Calu3 (cell line): ENCODE measurements at regions of chr2 and their contacts with region 1.

Region 1: GRCh38 chr2:64330281-64331113 is 123.5 kb upstream of the LGALSL start:
- DNase-seq: peak; percentile 74
- H3K4me3 Mint-ChIP-seq: peak overlapping the region; percentile 56
- H3K27ac Mint-ChIP-seq: no peak overlapping the region
- H3K4me1 Mint-ChIP-seq: peaks cover 18% of the 10 kb centered on the region
- H3K27me3 Mint-ChIP-seq: no peaks in the 10 kb centered on the region
- CTCF ChIP-seq: peak; percentile 84

Region 2: GRCh38 chr2:64052468-64053241 is 277.8 kb before region 1 on chr2:
- CTCF ChIA-PET with region 1: interaction called, 99 read pairs
- intact Hi-C with region 1: loop called (anchors 1 kb)
- DNase-seq: no peak
- H3K4me3 Mint-ChIP-seq: no peak overlapping the region
- H3K27ac Mint-ChIP-seq: no peak overlapping the region
- H3K4me1 Mint-ChIP-seq: peaks cover 8% of the 10 kb centered on the region
- H3K27me3 Mint-ChIP-seq: no peaks in the 10 kb centered on the region
- CTCF ChIP-seq: no peak

Region 3: GRCh38 chr2:64311948-64312621 is 18.4 kb before region 1 on chr2:
- CTCF ChIA-PET with region 1: interaction called, 17 read pairs
- intact Hi-C with region 1: no loop called
- DNase-seq: peak; percentile 79
- H3K4me3 Mint-ChIP-seq: peak overlapping the region; percentile 40
- H3K27ac Mint-ChIP-seq: peak overlapping the region; percentile 27
- H3K4me1 Mint-ChIP-seq: peaks cover 21% of the 10 kb centered on the region
- H3K27me3 Mint-ChIP-seq: peaks cover 13% of the 10 kb centered on the region
- CTCF ChIP-seq: peak; percentile 35

Region 4: DNA sequence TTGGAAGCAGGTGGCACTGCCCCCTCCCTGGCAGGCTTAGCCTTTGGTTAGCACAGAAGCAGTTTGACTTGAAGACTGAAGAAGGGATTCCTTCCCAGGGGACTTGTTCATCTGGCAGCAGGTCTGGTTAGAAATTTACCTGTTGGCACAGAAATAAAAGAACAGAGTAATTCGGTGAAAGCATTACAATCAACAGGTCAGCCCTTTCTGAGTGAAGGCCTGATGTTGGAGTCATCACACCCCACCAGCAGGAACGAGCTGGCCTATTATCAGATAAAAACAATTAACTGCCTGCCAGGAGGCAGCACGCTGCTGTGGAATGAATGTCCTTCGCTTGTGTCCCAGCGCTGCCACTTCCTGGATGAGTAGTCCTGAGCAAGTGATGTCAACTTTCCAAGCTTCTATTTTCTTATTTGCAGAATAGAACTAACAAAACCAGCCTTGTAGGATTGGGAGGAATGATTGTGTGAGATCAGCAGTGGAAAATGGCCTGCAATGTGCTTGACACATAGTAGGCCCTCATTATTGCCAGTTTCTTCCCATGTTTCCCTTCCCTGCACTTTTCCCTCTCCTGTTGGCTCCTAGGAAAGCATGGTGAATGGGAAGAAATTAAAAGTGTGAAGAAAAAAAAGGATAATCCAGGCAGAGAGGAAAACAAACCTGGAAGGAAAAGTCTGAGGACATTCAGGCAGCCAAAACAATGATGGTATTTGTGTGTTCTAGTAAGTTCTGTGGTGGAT is 152.4 kb after region 1 on chr2:
- CTCF ChIA-PET with region 1: interaction called, 38 read pairs
- intact Hi-C with region 1: loop called (anchors 1 kb)
- DNase-seq: peak; percentile 40
- H3K4me3 Mint-ChIP-seq: no peak overlapping the region
- H3K27ac Mint-ChIP-seq: no peak overlapping the region
- H3K4me1 Mint-ChIP-seq: no peaks in the 10 kb centered on the region
- H3K27me3 Mint-ChIP-seq: peaks cover 26% of the 10 kb centered on the region
- CTCF ChIP-seq: no peak

Region 5: DNA sequence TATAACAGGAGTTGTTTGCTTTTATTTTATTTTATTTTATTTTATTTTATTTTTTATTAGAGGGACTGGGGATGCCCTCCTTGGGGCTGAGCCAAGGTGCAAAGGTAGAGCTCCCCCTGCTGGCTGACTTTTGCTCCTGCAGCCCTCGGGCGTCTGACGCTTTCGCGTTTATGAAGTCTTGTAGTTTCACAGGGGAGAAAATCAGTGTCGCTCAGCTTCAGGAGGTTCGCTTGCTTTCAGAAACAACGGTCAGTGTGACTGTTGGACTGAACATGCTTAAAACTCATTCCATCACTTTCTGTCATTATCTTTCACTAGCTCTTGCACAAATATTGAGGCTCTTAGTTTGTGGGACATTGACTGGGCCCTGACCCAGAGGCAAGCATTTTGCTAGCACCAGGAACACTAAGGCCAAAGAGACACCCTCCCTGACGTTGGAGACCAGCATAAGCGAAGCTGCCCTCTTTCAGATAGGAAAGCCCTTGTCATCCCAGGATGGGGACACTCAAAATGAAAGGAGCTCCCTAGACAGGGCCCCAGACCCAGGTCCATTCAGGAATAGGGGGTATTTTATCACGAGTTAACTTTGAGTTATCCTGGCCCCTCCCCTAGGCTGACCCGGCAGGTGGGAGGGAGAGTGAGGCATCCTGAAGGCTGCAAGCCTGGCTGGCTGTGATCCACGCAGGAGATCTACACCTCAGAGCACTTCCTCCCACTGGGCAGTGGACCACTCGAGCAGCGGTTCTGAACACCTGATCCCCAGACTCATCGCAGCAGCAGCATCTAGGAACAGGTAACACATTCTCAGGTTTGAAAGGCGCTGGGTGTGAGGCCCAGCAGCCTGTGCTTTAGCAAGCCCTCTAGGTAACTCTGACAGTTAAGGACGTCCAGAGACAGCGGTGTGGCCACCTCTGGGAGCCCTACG is 157.8 kb after region 1 on chr2:
- CTCF ChIA-PET with region 1: interaction called, 38 read pairs
- intact Hi-C with region 1: loop called (anchors 1 kb)
- DNase-seq: peak; percentile 83
- H3K4me3 Mint-ChIP-seq: no peak overlapping the region
- H3K27ac Mint-ChIP-seq: no peak overlapping the region
- H3K4me1 Mint-ChIP-seq: no peaks in the 10 kb centered on the region
- H3K27me3 Mint-ChIP-seq: peaks cover 26% of the 10 kb centered on the region
- CTCF ChIP-seq: peak; percentile 95

Region 6: DNA sequence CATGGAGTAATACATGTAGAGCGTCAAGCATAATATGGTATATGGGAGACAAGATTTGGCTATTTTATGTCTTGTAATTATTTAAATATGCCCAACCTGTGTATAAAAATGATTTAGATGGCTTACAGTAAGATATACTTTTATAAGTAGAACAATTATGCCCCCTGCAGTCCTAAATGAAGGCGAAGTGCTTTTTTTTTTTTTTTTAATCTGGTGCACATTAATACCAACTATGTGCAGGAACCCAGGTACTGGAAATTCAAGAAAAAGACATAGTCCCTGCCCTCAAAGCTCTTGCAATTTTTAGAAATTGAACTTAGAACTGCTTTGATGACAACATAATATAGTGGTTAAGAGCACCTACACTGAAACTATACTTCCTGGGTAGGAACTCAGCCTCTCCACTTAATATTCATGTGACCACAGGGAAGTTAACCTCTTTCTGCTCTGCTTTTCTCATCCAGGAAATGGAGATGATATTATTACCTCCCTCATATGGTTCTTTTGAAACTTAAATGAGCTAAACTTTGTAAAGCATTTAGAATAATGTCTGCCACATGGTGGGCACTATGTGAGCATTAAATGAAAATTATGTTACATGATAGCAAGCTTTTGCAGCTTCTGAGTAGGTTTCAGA is 231.8 kb after region 1 on chr2:
- CTCF ChIA-PET with region 1: interaction called, 3 read pairs
- intact Hi-C with region 1: loop called (anchors 1 kb)
- DNase-seq: no peak
- H3K4me3 Mint-ChIP-seq: no peak overlapping the region
- H3K27ac Mint-ChIP-seq: no peak overlapping the region
- H3K4me1 Mint-ChIP-seq: no peaks in the 10 kb centered on the region
- H3K27me3 Mint-ChIP-seq: no peaks in the 10 kb centered on the region
- CTCF ChIP-seq: no peak

Region 7: GRCh38 chr2:64932371-64933216 is 602.1 kb after region 1 on chr2:
- CTCF ChIA-PET with region 1: no interaction called
- intact Hi-C with region 1: no loop called
- DNase-seq: no peak
- H3K4me3 Mint-ChIP-seq: no peak overlapping the region
- H3K27ac Mint-ChIP-seq: no peak overlapping the region
- H3K4me1 Mint-ChIP-seq: no peaks in the 10 kb centered on the region
- H3K27me3 Mint-ChIP-seq: peaks cover 70% of the 10 kb centered on the region
- CTCF ChIP-seq: no peak